Heart left ventricle (tissue), 16 donors: ENCODE measurements at regions of chr2 and their contacts with region 1.

Region 1: GRCh38 chr2:108988796-108989713 is at the start of gene EDAR:
- DNase-seq: peak in 3 of 5 donors; percentile 17 to 53 (median 24)
- ATAC-seq: peak; percentile 87 to 95 (median 90)
- H3K4me3 ChIP-seq: peak within 1 kb of the TSS in 3 of 12 donors; percentile 23 to 32 (median 28)
- H3K27ac ChIP-seq: no peak within 1 kb of the TSS
- H3K4me1 ChIP-seq: peaks cover 0 to 3% (median 0%) of the 10 kb centered on the region in 12 donors
- H3K27me3 ChIP-seq: peaks cover 0 to 29% (median 0%) of the 10 kb centered on the region in 9 donors
- CTCF ChIP-seq: peak in 11 of 12 donors; percentile 27 to 60 (median 49)
- POLR2A ChIP-seq: no peak
- total RNA-seq, gene EDAR: 0.16 to 0.20 TPM in 2 of 9 donors, not detected in the others

Region 2: GRCh38 chr2:108855194-108855593 is 133.9 kb before region 1 on chr2:
- intact Hi-C with region 1: loop called in 8 of 10 experiments (anchors 2 to 5 kb)
- DNase-seq: no peak
- ATAC-seq: peak in 2 of 4 donors; percentile 44 to 54
- H3K4me3 ChIP-seq: no peak overlapping the region
- H3K27ac ChIP-seq: no peak overlapping the region
- H3K4me1 ChIP-seq: no peaks in the 10 kb centered on the region
- H3K27me3 ChIP-seq: no peaks in the 10 kb centered on the region
- CTCF ChIP-seq: peak in 9 of 12 donors; percentile 10 to 42 (median 29)
- POLR2A ChIP-seq: no peak

Region 3: GRCh38 chr2:108927936-108928659 is 61.0 kb before region 1 on chr2:
- intact Hi-C with region 1: loop called in 8 of 10 experiments (anchors 1 to 5 kb)
- DNase-seq: no peak
- ATAC-seq: peak; percentile 23 to 67 (median 36)
- H3K4me3 ChIP-seq: no peak overlapping the region
- H3K27ac ChIP-seq: no peak overlapping the region
- H3K4me1 ChIP-seq: peaks cover 0 to 11% (median under 1%) of the 10 kb centered on the region in 12 donors
- H3K27me3 ChIP-seq: peaks cover 0 to 4% (median 0%) of the 10 kb centered on the region in 9 donors
- CTCF ChIP-seq: peak; percentile 53 to 73 (median 64)
- POLR2A ChIP-seq: no peak

Region 4: GRCh38 chr2:109033171-109033570 is 44.1 kb after region 1 on chr2:
- intact Hi-C with region 1: no loop called
- DNase-seq: no peak
- ATAC-seq: no peak
- H3K4me3 ChIP-seq: no peak overlapping the region
- H3K27ac ChIP-seq: peak overlapping the region in 1 of 12 donors; percentile 86
- H3K4me1 ChIP-seq: peaks cover 0 to 25% (median 5%) of the 10 kb centered on the region in 12 donors
- H3K27me3 ChIP-seq: peaks cover 0 to 6% (median 0%) of the 10 kb centered on the region in 9 donors
- CTCF ChIP-seq: no peak
- POLR2A ChIP-seq: no peak

Region 5: GRCh38 chr2:109046925-109047508 is 58.0 kb after region 1 on chr2:
- intact Hi-C with region 1: no loop called
- DNase-seq: no peak
- ATAC-seq: peak in 2 of 4 donors; percentile 49 to 50
- H3K4me3 ChIP-seq: no peak overlapping the region
- H3K27ac ChIP-seq: no peak overlapping the region
- H3K4me1 ChIP-seq: no peaks in the 10 kb centered on the region
- H3K27me3 ChIP-seq: no peaks in the 10 kb centered on the region
- CTCF ChIP-seq: no peak
- POLR2A ChIP-seq: no peak